Lower leg skin (tissue), 4 donors: ENCODE measurements at regions of chr3 and their contacts with region 1.

Region 1: DNA sequence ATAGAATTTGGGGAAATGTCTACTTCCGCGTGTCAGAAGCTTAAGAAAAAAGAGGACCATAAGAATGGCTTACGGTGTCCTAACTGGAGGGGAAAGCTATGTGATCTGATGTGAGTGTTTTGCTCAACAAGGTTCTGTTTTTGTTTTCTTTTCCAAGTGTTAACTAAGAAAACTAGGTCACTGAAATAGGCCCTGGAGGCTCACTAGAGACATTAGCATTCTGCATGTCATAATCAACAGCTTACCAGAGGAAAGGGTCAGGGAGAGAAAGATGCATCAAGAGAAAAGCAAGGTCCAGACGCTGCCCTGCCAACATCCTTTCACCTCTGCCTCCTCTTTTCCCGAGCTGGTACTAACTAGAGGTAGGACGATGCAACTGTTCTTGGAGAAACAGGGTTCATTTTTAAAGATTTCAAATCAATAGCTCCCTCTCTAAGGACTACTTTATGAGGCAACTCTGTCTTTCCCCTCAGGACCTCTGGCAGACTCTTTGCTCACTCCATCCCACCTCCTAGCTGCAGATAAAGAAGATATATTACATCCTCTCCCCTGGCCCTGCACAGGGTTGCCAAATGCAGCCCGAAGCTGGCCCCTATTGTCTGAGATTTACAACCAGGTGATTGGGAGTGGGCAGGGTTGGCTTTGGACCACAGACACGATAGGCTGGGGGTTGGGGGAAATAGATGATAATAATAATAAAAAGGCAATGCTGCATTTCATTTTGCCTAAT is 209.9 kb upstream of the SLC2A2 start:
- DNase-seq: no peak
- H3K4me3 ChIP-seq: no peak overlapping the region
- CTCF ChIP-seq: no peak
- POLR2A ChIP-seq: no peak

Region 2: GRCh38 chr3:171279972-171280371 is 43.5 kb after region 1 on chr3:
- intact Hi-C with region 1: loop called (anchors 2 kb)
- DNase-seq: no peak
- H3K4me3 ChIP-seq: no peak overlapping the region
- CTCF ChIP-seq: no peak
- POLR2A ChIP-seq: no peak

Region 3: GRCh38 chr3:171375666-171376595 is 139.5 kb after region 1 on chr3:
- intact Hi-C with region 1: no loop called
- DNase-seq: no peak
- H3K4me3 ChIP-seq: no peak overlapping the region
- CTCF ChIP-seq: no peak
- POLR2A ChIP-seq: no peak